PC-3 (cell line): ENCODE measurements at regions of chr7 and their contacts with region 1.

Region 1: DNA sequence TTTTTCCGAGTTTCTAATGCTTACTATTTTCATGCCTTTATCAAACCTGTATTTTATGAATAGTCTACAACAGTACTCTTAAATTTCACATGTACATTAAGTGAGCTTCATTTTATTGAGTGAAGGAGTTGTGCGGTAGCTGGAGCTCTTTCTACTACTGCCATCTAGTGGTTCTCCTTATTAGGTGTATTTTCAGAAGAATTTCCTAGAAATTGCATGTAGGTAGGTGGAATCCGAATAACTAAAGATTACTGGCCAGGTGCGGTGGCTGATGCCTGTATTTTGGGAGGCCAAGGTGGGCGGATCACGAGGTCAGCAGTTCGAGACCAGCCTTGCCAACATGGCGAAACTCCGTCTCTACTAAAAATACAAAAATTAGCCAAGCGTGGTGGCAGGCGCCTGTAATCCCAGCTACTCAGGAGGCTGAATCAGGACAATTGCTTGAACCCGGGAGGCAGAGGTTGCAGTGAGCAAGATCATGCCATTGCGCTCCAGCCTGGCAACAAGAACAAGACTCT is 38.3 kb downstream of the LRRC72 start:
- DNase-seq: peak; percentile 82
- ATAC-seq: peak; percentile 81
- H3K4me3 ChIP-seq: no peak overlapping the region
- H3K27ac ChIP-seq: no peak overlapping the region
- H3K4me1 ChIP-seq: no peaks in the 10 kb centered on the region
- H3K27me3 ChIP-seq: no peaks in the 10 kb centered on the region
- CTCF ChIP-seq: peak; percentile 86

Region 2: GRCh38 chr7:14761510-14762296 is 1803.3 kb before region 1 on chr7:
- CTCF ChIA-PET with region 1: no interaction called
- POLR2A ChIA-PET with region 1: no interaction called
- intact Hi-C with region 1: no loop called
- DNase-seq: peak; percentile 92
- ATAC-seq: peak; percentile 81
- H3K4me3 ChIP-seq: peak overlapping the region; percentile 32; the same call in 1 of the 2 replicates
- H3K27ac ChIP-seq: peak overlapping the region; percentile 96
- H3K4me1 ChIP-seq: peaks cover 54% of the 10 kb centered on the region
- H3K27me3 ChIP-seq: no peaks in the 10 kb centered on the region
- CTCF ChIP-seq: no peak

Region 3: DNA sequence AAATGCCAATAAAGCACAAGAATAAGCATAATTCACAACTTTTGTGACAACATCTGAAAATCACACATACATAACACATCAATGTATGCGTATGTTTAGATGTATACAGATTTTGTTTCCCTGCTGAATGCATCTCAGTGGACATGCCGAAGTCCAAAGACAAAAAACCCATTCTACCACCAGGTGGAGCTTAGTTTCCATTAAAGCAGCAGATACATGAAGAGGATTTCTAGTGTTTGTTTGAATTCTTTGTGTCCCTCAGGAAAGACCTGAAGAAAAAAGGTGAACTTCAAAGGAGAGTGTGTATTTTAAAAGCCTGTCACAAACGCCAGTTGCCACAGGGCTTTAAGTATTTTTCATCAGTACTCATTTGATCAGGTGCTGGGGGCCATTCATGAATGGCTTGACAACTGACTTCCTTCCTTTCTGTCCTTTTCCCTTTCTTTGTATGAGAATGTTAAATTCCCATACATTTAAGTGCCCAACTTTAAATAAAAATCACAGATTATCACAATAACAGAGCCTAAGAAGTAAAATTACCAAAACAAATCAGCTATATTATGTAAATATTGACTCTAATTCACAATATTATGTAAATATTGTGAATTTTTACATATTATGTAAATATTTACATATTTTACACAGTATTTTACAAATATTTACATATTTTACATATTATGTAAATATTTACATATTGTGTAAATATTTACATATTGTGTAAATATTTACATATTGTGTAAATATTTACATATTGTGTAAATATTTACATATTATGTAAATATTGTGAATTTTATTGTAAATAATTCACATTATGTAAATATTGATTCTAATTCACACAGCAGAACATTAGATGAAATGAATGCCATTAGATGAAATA is 486.7 kb before region 1 on chr7:
- CTCF ChIA-PET with region 1: interaction called, 3 read pairs
- POLR2A ChIA-PET with region 1: no interaction called
- intact Hi-C with region 1: loop called (anchors 1 kb)
- DNase-seq: peak; percentile 76
- ATAC-seq: peak; percentile 92
- H3K4me3 ChIP-seq: no peak overlapping the region
- H3K27ac ChIP-seq: no peak overlapping the region
- H3K4me1 ChIP-seq: no peaks in the 10 kb centered on the region
- H3K27me3 ChIP-seq: no peaks in the 10 kb centered on the region
- CTCF ChIP-seq: peak; percentile 89

Region 4: DNA sequence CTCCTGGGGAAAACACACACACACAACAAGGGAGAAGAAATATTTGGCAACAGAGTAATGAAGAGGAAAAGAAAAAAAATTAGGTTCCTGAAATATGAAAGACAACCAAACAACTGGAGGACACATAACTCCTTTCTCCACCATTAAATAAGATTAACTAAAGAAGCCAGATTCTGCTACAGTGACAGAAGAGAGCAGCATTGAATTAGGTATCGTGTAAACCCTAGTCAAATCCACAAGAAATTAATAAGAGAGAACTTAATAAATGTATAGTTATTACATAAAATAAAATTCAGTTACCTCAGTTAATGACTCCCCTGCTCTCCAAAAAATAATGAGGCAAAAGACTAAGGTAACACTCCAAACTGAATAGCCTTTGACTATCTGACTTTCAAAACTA is 450.3 kb before region 1 on chr7:
- CTCF ChIA-PET with region 1: interaction called, 5 read pairs
- POLR2A ChIA-PET with region 1: no interaction called
- intact Hi-C with region 1: loop called (anchors 1 kb)
- DNase-seq: peak; percentile 51
- ATAC-seq: peak; percentile 59
- H3K4me3 ChIP-seq: no peak overlapping the region
- H3K27ac ChIP-seq: no peak overlapping the region
- H3K4me1 ChIP-seq: no peaks in the 10 kb centered on the region
- H3K27me3 ChIP-seq: no peaks in the 10 kb centered on the region
- CTCF ChIP-seq: peak; percentile 71

Region 5: DNA sequence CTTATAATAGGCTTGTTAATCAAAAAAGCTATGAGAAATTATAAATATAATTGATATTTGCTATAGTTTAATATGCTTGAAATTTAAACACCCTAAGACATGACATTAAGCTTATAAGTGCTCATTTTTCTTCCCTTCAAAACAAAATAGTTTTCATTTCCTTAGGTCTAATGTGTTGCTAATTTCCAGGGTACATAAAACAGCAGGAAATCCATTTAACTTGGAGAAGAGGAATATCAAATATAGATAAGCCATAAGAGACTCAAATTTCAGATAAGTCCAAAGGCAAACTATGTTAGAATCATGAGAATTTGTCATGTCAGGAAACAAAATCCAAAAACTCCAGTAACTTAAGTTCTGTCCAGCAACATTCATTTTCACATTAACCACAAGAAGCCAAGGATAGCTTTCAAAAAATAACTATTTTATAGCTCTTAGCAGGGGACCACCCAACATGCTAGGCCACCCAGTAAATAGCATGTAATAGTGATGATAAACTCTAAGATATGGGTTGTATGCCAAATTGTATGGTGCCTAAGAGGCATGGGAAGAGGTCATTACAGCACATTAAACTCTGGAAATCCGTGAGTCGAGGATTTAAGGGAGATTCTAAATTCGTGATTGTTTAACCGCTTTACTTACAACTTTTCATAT is 441.7 kb before region 1 on chr7:
- CTCF ChIA-PET with region 1: no interaction called
- POLR2A ChIA-PET with region 1: interaction called, 38 read pairs
- intact Hi-C with region 1: no loop called
- DNase-seq: no peak
- ATAC-seq: no peak
- H3K4me3 ChIP-seq: no peak overlapping the region
- H3K27ac ChIP-seq: no peak overlapping the region
- H3K4me1 ChIP-seq: no peaks in the 10 kb centered on the region
- H3K27me3 ChIP-seq: no peaks in the 10 kb centered on the region
- CTCF ChIP-seq: no peak

Region 6: DNA sequence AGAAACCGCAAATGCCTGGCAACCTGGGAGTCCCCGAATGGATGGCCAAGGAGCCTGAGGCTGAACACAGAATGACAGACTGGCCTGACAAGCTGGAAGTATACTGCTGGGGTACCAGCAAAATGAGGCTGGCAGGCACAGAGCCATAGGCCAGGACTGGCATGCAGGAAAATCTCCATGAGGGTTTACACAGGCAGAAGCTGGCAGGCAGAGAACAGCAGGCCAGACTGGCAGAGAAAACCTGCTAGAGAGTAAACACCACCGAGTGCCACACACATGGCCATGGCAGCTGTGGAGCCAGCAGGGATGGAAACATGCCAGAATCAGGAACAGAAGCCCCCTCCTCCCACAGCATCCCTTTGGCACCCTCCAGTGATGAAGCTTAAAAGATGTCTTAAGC is 207.0 kb before region 1 on chr7:
- CTCF ChIA-PET with region 1: interaction called, 4 read pairs
- POLR2A ChIA-PET with region 1: no interaction called
- intact Hi-C with region 1: loop called (anchors 10 kb)
- DNase-seq: no peak
- ATAC-seq: no peak
- H3K4me3 ChIP-seq: no peak overlapping the region
- H3K27ac ChIP-seq: no peak overlapping the region
- H3K4me1 ChIP-seq: peaks cover 11% of the 10 kb centered on the region
- H3K27me3 ChIP-seq: no peaks in the 10 kb centered on the region
- CTCF ChIP-seq: no peak

Region 7: DNA sequence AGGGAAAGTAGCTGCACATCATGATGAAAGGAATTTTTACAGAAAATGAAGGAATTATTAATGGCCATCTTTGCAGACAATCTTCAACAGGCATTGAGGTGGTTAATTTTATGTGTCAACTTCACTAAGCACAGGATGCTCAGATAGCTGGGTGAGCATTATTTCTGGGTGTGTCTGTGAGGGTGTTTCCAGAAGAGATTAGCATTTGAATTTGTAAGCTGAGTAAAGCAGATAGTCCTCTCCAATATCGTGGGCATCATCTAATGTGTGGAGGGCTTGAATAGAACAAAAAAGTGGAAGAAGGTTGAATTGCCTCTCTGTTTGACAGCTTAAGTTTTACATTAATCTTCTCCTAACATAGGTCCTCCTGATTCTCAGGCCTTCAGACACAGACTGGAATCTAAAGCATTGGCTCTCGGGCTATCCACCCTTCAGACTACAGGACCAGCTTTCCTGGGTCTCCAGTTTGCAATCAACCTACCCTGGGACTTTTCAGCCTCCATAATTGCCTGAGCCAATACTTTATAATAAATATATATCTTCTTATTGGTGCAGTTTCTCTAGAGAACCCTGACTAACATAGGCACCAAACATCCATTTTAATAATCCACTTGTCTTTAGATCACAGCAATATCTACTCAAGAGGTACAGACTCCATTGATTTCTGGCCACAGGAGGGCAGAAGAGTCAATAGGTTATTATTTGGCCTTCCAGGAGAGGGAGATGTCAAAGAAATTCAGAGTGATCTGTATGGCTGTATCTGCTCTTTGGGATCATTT is 133.1 kb before region 1 on chr7:
- CTCF ChIA-PET with region 1: interaction called, 21 read pairs
- POLR2A ChIA-PET with region 1: no interaction called
- intact Hi-C with region 1: loop called (anchors 1 kb)
- DNase-seq: peak; percentile 64
- ATAC-seq: peak; percentile 64
- H3K4me3 ChIP-seq: no peak overlapping the region
- H3K27ac ChIP-seq: no peak overlapping the region
- H3K4me1 ChIP-seq: peaks cover 26% of the 10 kb centered on the region
- H3K27me3 ChIP-seq: no peaks in the 10 kb centered on the region
- CTCF ChIP-seq: peak; percentile 77

Region 8: DNA sequence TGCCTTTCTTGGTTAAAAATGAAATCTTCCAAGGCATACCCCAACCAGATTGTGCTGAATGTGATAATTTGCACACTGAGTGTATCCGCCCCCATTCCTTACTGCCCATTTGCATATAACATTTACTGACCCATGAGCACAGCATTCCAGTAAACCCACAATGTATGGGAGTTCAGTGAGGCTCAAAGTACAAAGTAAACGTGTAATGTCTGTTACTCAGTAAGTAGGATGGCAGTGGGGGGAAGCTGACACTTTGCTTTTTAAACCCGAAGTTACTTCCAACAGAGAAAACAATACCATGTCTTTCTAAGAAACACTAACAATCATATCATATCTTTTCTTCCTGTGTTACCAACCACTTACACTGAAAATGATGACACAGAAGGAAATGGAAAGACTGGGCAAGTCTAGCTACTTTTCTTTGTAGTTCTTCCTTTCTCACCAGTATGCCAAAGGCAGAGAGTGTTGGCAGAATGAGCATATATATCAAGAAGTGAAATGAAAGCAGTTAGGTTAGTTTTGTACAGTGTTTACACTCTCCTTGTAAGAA is 72.4 kb before region 1 on chr7:
- CTCF ChIA-PET with region 1: interaction called, 5 read pairs
- POLR2A ChIA-PET with region 1: no interaction called
- intact Hi-C with region 1: loop called (anchors 2 kb)
- DNase-seq: peak; percentile 46
- ATAC-seq: peak; percentile 72
- H3K4me3 ChIP-seq: no peak overlapping the region
- H3K27ac ChIP-seq: peak overlapping the region; percentile 5; the same call in 1 of the 2 replicates
- H3K4me1 ChIP-seq: peaks cover 21% of the 10 kb centered on the region
- H3K27me3 ChIP-seq: no peaks in the 10 kb centered on the region
- CTCF ChIP-seq: no peak

Region 9: DNA sequence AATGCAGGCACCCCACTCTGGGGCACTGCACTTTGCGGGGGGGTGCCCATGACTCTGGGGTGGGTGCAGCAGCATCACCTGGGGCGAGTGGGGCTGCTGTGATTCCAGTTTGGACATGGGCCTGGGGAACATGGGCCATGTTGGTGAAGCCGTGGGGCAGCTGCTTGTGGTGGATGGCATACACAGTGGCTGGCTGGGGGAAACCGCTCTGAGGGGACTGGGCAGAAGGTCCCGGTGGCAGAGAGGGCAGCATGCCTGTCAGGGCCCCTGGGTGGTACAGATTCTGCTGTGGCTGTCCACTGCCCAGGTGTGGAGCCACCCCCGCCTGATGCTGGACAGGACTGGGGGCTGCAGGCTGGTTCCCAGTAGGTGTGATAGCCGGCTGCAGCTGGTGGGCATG is 18.9 kb after region 1 on chr7:
- CTCF ChIA-PET with region 1: no interaction called
- POLR2A ChIA-PET with region 1: no interaction called
- intact Hi-C with region 1: no loop called
- DNase-seq: no peak
- ATAC-seq: no peak
- H3K4me3 ChIP-seq: no peak overlapping the region
- H3K27ac ChIP-seq: no peak overlapping the region
- H3K4me1 ChIP-seq: no peaks in the 10 kb centered on the region
- H3K27me3 ChIP-seq: no peaks in the 10 kb centered on the region
- CTCF ChIP-seq: no peak

Region 10: DNA sequence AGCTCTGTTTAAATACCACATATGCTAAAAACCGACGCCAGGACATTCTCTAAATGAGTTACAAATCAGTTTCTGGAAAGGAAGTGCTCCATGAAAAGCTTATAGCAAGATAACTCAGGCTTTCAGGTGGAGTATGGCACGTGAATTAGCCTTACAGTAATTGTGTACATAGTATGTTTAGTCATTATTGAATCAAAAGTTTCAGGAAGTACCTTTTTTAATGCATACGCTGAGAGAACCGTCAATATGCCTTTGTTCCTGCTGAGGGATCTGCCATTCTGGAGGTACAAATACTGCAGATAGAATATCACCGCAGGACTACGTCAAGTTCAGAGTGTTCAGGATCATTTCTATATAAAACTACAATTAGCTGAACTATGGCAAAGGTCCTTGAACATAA is 34.9 kb after region 1 on chr7:
- CTCF ChIA-PET with region 1: no interaction called
- POLR2A ChIA-PET with region 1: no interaction called
- intact Hi-C with region 1: no loop called
- DNase-seq: peak; percentile 58
- ATAC-seq: peak; percentile 94
- H3K4me3 ChIP-seq: no peak overlapping the region
- H3K27ac ChIP-seq: no peak overlapping the region
- H3K4me1 ChIP-seq: peaks cover 9% of the 10 kb centered on the region
- H3K27me3 ChIP-seq: no peaks in the 10 kb centered on the region
- CTCF ChIP-seq: no peak

Region 11: DNA sequence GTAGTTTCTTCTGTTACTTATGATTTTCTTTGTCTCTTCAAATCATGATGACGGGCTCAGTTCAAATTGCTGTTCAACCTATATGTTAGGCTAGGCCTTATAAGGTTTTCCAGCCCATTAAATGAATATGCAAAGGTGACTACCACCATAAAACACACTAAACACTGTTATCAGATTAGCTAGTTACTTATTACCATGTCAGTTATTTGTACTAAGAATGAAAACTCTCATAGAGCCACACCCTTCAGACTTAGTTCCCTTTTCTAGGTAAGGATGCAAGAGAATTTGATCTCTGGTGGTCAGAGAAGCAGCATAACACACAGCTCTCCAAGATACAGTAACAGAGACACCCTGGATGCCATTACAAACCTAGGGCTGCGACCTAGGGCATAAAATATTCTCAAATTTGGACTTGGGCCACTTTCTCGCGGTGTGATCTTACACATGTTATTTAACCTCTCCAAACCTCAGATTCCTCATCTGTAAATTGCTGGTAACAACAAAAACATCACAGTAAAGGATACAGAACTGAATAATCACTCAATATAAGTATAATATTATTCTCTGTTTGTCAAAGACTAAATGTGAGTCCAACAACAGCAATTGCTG is 45.0 kb after region 1 on chr7:
- CTCF ChIA-PET with region 1: no interaction called
- POLR2A ChIA-PET with region 1: no interaction called
- intact Hi-C with region 1: no loop called
- DNase-seq: no peak
- ATAC-seq: no peak
- H3K4me3 ChIP-seq: no peak overlapping the region
- H3K27ac ChIP-seq: no peak overlapping the region
- H3K4me1 ChIP-seq: no peaks in the 10 kb centered on the region
- H3K27me3 ChIP-seq: no peaks in the 10 kb centered on the region
- CTCF ChIP-seq: no peak